HepG2 (cell line): ENCODE measurements at regions of chr14 and their contacts with region 1.

Region 1: DNA sequence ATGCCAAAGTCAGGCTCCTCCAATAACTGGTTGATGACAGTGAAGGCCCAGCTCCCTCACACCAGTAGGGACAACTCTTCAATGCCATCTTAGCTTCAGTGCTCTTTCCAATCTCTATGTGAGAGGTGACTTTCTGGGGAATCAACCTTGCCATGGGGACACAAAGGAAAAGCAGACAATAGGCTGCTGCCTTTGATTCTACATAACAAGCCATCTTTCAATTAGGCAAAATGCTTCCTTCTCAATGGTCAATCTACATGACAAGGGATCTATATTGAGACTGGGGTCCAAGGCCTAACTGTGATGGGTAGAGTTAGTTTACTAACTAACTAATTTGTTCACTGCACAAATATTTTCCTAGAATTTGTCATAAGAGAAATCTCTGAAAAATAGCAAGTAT is 1417.5 kb upstream of the SEL1L start:
- DNase-seq: no peak
- ATAC-seq: no peak
- H3K4me3 ChIP-seq: no peak overlapping the region
- H3K27ac ChIP-seq: no peak overlapping the region
- H3K4me1 ChIP-seq: no peaks in the 10 kb centered on the region
- H3K27me3 ChIP-seq: no peaks in the 10 kb centered on the region
- CTCF ChIP-seq: no peak
- EP300 ChIP-seq: no peak
- POLR2A ChIP-seq: no peak
- RAD21 ChIP-seq: no peak

Region 2: DNA sequence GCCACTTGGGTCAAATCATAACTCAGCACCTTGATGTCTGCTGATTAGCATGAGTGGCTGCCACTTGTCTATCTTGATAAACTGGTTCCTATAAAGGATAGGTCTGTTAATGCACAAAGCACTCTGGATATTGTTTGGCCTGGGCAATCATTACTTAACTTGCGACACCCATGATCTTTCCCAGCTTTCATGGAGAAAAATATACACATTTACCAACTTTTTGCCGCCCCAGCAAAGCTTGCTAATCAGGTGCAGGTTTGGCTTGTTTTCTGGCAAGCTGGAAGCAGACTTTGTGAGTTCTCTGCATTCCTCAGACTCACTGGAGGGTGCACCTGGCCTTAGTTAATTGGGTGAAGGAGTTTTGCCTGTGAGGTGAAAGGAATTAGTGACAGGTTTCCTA is 1452.4 kb after region 1 on chr14:
- CTCF ChIA-PET with region 1: no interaction called
- POLR2A ChIA-PET with region 1: no interaction called
- in situ Hi-C with region 1: no loop called
- intact Hi-C with region 1: loop called (anchors 10 kb)
- DNase-seq: no peak
- ATAC-seq: no peak
- H3K4me3 ChIP-seq: no peak overlapping the region
- H3K27ac ChIP-seq: no peak overlapping the region
- H3K4me1 ChIP-seq: no peaks in the 10 kb centered on the region
- H3K27me3 ChIP-seq: no peaks in the 10 kb centered on the region
- CTCF ChIP-seq: no peak
- EP300 ChIP-seq: no peak
- POLR2A ChIP-seq: no peak
- RAD21 ChIP-seq: no peak